Activated CD4-positive, alpha-beta T cell treated with anti-CD3 and anti-CD28 coated beads for 36 hours (primary cell): ENCODE measurements at regions of chr5 and their contacts with region 1.

Region 1: DNA sequence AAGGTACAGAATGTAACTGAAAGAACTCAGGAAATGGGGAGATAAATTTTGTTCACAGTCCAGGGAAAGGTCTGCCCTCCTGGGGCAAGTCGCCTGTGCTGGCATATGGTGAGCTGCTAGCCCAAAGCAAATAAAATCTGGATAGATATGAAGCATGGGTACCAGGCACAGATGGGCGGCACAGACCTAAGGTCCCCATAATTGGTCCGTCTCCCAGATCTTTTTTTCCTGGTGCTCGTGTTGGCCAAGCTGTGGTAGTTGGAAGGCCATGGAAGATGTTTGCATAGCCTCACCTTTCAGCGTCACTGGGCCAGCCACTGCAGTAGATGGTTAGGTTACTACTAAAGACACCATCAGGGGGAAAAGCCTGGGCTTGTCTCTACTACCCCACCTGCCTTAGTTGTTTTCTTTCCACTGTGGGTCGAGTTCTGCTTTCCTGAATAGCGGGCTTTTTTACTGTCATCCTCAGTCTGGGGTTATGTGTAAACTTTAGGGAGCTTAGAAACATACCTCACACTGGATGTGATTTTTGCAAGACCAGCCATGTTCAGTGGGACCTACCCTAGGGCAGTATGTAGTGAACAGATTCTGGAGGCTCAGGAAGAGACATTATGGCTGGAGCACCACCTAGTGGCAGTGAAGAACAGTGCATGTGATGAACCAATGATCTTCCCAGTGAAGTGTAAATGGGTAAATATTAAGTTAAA is 24.2 kb upstream of the GLRX start:
- DNase-seq: peak; percentile 79
- ATAC-seq: peak; percentile 54
- H3K4me3 Mint-ChIP-seq: no peak overlapping the region
- H3K27ac Mint-ChIP-seq: no peak overlapping the region
- H3K4me1 Mint-ChIP-seq: peaks cover 11% of the 10 kb centered on the region
- H3K27me3 Mint-ChIP-seq: peaks cover 4% of the 10 kb centered on the region

Region 2: DNA sequence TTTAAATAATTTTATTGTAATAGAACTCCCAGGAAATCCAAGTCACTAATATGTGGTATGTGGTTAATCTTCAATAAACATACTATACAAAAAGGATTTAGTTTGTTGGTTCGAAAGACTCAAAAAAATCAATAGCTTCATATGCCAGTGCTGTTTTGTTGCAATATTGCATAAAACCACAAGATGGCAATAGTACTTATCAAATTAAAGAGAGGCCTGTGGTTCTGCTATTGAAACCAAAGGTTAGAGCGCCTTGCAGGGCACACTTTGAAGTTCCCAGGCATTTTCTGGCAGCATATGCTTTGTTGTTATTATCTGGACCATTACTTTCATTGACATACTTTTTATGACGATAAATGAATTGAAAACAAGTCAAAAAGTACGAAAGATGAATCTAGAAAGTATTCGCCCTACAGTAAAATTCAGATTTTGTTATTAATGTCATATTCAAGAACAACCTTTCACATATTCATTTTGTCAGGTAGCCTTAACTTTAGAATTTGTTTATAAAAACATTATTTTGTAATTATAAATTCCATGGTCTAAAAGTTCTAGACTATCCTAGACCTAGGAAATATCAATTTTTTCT is 878.1 kb before region 1 on chr5:
- CTCF ChIA-PET with region 1: no interaction called
- POLR2A ChIA-PET with region 1: no interaction called
- intact Hi-C with region 1: loop called in 1 of 2 experiments (anchors 1 kb)
- DNase-seq: peak; percentile 19
- ATAC-seq: peak; percentile 68
- H3K4me3 Mint-ChIP-seq: no peak overlapping the region
- H3K27ac Mint-ChIP-seq: no peak overlapping the region
- H3K4me1 Mint-ChIP-seq: no peaks in the 10 kb centered on the region
- H3K27me3 Mint-ChIP-seq: no peaks in the 10 kb centered on the region

Region 3: DNA sequence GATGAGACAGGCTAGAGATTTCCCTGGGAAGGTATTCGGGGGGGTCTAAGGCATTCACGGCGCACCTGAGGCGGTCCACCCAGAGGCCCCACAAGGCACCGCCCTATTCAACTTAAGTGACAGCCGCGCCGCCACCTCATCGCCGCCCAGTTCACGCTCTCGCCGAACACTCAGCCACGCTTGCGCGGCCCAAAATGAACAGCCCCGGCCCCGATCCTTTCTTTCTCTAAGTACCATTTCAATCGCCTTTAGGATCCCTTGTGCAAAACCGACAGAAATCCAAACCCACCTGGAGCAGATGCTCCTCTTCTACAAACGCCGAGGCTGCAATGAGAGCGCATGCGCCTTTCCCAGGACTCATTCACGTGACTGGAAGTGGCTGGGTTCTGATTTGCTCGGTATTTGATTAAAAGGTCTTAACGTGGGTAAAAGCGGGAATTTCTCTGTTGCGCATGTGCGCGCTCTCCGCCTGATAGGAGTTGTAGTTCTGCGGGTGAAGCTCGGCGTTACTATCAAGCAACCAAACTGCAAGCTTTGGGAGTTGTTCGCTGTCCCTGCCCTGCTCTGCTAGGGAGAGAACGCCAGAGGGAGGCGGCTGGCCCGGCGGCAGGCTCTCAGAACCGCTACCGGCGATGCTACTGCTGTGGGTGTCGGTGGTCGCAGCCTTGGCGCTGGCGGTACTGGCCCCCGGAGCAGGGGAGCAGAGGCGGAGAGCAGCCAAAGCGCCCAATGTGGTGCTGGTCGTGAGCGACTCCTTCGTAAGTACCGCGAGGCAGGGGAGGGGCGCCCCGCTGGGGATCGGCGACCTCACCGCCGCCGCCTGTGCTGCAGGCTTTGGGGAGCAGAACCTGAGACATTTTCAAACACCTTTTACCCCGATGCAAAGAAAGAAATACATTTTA is 291.8 kb before region 1 on chr5 and contains the starts of genes ARSK and SKIC3:
- CTCF ChIA-PET with region 1: interaction called, 3 read pairs
- POLR2A ChIA-PET with region 1: no interaction called
- intact Hi-C with region 1: loop called in 1 of 2 experiments (anchors 2 kb)
- DNase-seq: peak; percentile 92
- ATAC-seq: peak; percentile 91
- H3K4me3 Mint-ChIP-seq: peak within 1 kb of the TSS; percentile 88
- H3K27ac Mint-ChIP-seq: peak within 1 kb of the TSS; percentile 90
- H3K4me1 Mint-ChIP-seq: peaks cover 37% of the 10 kb centered on the region
- H3K27me3 Mint-ChIP-seq: no peaks in the 10 kb centered on the region
- total RNA-seq, gene ARSK: 4.6 to 5.3 TPM
- total RNA-seq, gene SKIC3: 74.6 to 75.8 TPM

Region 4: GRCh38 chr5:95781101-95781583 is 65.6 kb before region 1 on chr5:
- CTCF ChIA-PET with region 1: interaction called, 142 read pairs
- POLR2A ChIA-PET with region 1: interaction called, 4 read pairs
- intact Hi-C with region 1: loop called (anchors 1 kb)
- DNase-seq: peak; percentile 84
- ATAC-seq: peak; percentile 99
- H3K4me3 Mint-ChIP-seq: no peak overlapping the region
- H3K27ac Mint-ChIP-seq: peak overlapping the region; percentile 12
- H3K4me1 Mint-ChIP-seq: peaks cover 5% of the 10 kb centered on the region
- H3K27me3 Mint-ChIP-seq: no peaks in the 10 kb centered on the region

Region 5: GRCh38 chr5:95822542-95823181 is 24.0 kb before region 1 on chr5 and contains the start of gene GLRX:
- CTCF ChIA-PET with region 1: interaction called, 35 read pairs
- POLR2A ChIA-PET with region 1: no interaction called
- intact Hi-C with region 1: loop called in 1 of 2 experiments (anchors 2 kb)
- DNase-seq: peak; percentile 68
- ATAC-seq: peak; percentile 18
- H3K4me3 Mint-ChIP-seq: peak within 1 kb of the TSS; percentile 92
- H3K27ac Mint-ChIP-seq: peak within 1 kb of the TSS; percentile 92
- H3K4me1 Mint-ChIP-seq: peaks cover 62% of the 10 kb centered on the region
- H3K27me3 Mint-ChIP-seq: no peaks in the 10 kb centered on the region
- total RNA-seq, gene GLRX: 21.0 to 31.5 TPM

Region 6: DNA sequence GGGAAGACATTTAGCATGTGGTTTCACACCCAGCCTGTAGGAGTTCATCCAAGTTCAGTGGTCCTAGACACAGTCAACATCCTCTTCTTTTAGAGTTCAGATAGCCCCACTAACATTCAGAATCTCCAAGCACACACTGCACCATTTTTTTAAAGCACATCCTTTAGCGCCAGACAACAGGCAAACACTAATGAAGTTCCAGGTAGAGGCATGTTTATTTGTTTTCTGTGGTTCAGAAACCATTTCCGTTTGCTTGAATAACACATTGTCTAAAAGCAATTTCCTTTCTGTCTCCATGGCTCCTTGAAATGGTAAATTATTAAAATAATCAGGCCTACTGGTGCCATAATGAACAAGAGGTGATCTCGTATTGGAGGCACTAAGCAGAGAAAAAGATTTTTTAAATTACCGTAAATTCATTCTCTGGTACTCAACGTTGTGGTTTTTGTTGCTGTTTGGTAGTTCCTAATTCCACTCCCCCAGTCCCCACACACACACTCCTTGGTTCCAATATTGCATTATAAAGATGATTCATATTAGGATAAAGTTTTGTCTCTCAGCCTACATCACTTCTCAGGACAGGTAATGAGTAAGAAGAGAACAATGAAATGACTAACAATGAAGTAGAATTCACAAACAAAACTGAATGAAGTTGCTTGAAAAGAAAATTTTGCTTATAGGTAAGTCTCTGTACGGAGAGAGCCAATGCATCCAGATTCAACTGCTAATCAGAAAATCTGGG is 433.3 kb after region 1 on chr5:
- CTCF ChIA-PET with region 1: no interaction called
- POLR2A ChIA-PET with region 1: no interaction called
- intact Hi-C with region 1: no loop called
- DNase-seq: peak; percentile 48
- ATAC-seq: peak; percentile 96
- H3K4me3 Mint-ChIP-seq: no peak overlapping the region
- H3K27ac Mint-ChIP-seq: peak overlapping the region; percentile 35
- H3K4me1 Mint-ChIP-seq: peaks cover 23% of the 10 kb centered on the region
- H3K27me3 Mint-ChIP-seq: peaks cover 30% of the 10 kb centered on the region

Region 7: DNA sequence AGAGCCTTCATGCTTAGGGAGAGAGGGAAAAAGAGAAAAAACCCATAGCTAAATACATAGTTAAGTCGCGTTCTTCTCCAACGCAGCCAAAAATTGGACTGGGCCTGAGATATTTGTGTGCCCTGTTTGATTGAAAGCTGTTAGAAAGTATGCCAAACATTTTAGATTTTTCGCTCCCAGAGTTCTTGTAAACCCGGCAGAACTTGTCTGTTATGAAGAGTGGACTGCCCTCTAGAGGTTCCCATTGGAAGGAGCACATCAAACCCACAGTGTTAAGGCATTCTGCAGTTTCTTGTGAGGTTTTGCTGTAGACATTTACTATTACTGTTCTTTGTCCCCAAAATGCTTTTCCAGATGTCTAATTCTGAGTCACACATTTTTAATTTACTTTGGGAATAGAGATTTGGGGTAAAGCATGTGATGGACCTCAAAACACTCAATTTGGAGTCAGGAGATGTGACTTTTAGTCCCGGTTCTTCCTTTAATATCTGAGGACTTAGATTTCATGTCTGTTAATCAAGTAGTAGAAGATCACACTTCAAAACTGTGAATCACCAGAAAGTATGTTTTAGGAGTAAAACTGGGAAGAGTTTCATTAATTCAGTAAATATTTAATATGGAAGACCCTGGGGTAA is 489.8 kb after region 1 on chr5:
- CTCF ChIA-PET with region 1: interaction called, 10 read pairs
- POLR2A ChIA-PET with region 1: no interaction called
- intact Hi-C with region 1: no loop called
- DNase-seq: peak; percentile 74
- ATAC-seq: peak; percentile 82
- H3K4me3 Mint-ChIP-seq: no peak overlapping the region
- H3K27ac Mint-ChIP-seq: no peak overlapping the region
- H3K4me1 Mint-ChIP-seq: peaks cover 9% of the 10 kb centered on the region
- H3K27me3 Mint-ChIP-seq: peaks cover 26% of the 10 kb centered on the region